ENCODE measurements at regions of chr15 and their contacts with region 1.

Region 1: GRCh38 chr15:88246666-88247446 is 9.7 kb downstream of the NTRK3 start:
- DNase-seq: peak; percentile 66 to 88 (median 78)
- H3K4me3 ChIP-seq: peak overlapping the region in 54 of 59 donors; percentile 6 to 57 (median 38)
- H3K27ac ChIP-seq: peak overlapping the region in 21 of 59 donors; percentile 5 to 66 (median 46)
- H3K27me3 ChIP-seq: no peaks in the 10 kb centered on the region
- CTCF ChIP-seq: peak; percentile 89 to 99 (median 97)

Region 2: GRCh38 chr15:87672309-87673288 is 574.3 kb before region 1 on chr15:
- intact Hi-C with region 1: loop called in 1 of 2 experiments (anchors 10 kb)
- DNase-seq: peak in 5 of 10 donors; percentile 6 to 46 (median 32)
- H3K4me3 ChIP-seq: no peak overlapping the region
- H3K27ac ChIP-seq: no peak overlapping the region
- H3K27me3 ChIP-seq: peaks cover 0 to 2% (median 0%) of the 10 kb centered on the region in 45 donors
- CTCF ChIP-seq: peak in 55 of 56 donors; percentile 22 to 71 (median 56)

Region 3: DNA sequence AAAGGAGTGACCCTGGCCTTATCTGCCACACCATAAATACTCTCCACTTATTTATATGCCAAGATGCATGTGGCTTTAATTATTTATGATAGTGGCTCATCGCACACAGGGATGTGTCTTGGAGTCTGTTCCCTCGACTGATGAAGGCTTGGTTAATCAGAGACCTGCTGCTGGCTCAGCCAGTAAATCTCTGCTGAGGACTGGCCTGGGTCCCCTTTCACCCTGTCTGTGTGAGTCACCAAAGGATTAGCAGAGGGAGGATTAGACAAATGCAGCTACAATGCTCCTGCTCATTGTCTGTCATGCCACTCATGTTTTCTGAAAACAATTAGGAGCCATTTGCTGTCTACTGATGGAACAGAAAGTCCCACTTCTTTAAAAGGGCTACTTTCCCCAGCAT is 217.2 kb before region 1 on chr15:
- intact Hi-C with region 1: loop called in 1 of 2 experiments (anchors 10 kb)
- DNase-seq: no peak
- H3K4me3 ChIP-seq: no peak overlapping the region
- H3K27ac ChIP-seq: no peak overlapping the region
- H3K27me3 ChIP-seq: no peaks in the 10 kb centered on the region
- CTCF ChIP-seq: no peak

Region 4: GRCh38 chr15:88274553-88275460 is 28.0 kb after region 1 on chr15:
- intact Hi-C with region 1: loop called in 1 of 2 experiments (anchors 1 kb)
- DNase-seq: peak; percentile 62 to 84 (median 74)
- H3K4me3 ChIP-seq: no peak overlapping the region
- H3K27ac ChIP-seq: peak overlapping the region in 38 of 59 donors; percentile 1 to 74 (median 34)
- H3K27me3 ChIP-seq: no peaks in the 10 kb centered on the region
- CTCF ChIP-seq: peak; percentile 66 to 97 (median 87)